GM12878 (cell line): ENCODE measurements at regions of chr1 and their contacts with region 1.

Region 1: GRCh38 chr1:115052454-115053083 is 22.9 kb downstream of the TSHB start:
- DNase-seq: no peak
- ATAC-seq: peak; percentile 88
- H3K4me3 ChIP-seq: no peak overlapping the region
- H3K27ac ChIP-seq: no peak overlapping the region
- H3K4me1 ChIP-seq: no peaks in the 10 kb centered on the region
- H3K27me3 ChIP-seq: no peaks in the 10 kb centered on the region; a peak in 1 of 4 replicates
- CTCF ChIP-seq: peak; percentile 78 to 84 (median 81)
- EP300 ChIP-seq: no peak
- POLR2A ChIP-seq: no peak
- RAD21 ChIP-seq: peak; percentile 64

Region 2: GRCh38 chr1:114979278-114979891 is 73.2 kb before region 1 on chr1:
- CTCF ChIA-PET with region 1: interaction called, 52 read pairs
- POLR2A ChIA-PET with region 1: no interaction called
- RAD21 ChIA-PET with region 1: interaction called, 18 read pairs
- SMC1A ChIA-PET with region 1: interaction called, 65 read pairs
- in situ Hi-C with region 1: no loop called
- intact Hi-C with region 1: loop called (anchors 1 kb)
- DNase-seq: peak; percentile 13
- ATAC-seq: peak; percentile 72
- H3K4me3 ChIP-seq: no peak overlapping the region
- H3K27ac ChIP-seq: no peak overlapping the region
- H3K4me1 ChIP-seq: no peaks in the 10 kb centered on the region
- H3K27me3 ChIP-seq: no peaks in the 10 kb centered on the region
- CTCF ChIP-seq: peak; percentile 60 to 70 (median 65); a peak in 5 of 6 replicates
- EP300 ChIP-seq: no peak
- POLR2A ChIP-seq: no peak
- RAD21 ChIP-seq: peak; percentile 73

Region 3: DNA sequence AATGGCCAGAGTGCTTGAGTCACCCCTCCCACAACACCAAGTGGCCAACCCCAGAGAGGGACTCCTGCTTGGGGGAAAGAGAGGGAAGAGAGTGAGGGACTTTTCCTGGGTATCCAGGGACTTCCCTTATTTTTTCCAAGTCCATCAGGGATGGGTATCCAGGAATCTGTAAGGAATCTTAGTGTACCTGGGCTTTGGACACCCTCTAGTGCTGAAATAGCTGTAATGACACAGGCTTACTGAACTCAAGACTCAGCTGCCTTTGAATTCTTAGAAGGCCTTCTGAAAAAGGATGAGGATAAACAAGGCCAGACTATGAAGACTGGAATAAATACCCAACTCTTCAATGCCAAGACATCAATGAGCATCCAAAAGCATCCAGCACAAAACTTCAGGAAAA is 10.9 kb before region 1 on chr1:
- CTCF ChIA-PET with region 1: interaction called, 63 read pairs
- POLR2A ChIA-PET with region 1: no interaction called
- RAD21 ChIA-PET with region 1: interaction called, 4 read pairs
- SMC1A ChIA-PET with region 1: interaction called, 5 read pairs
- in situ Hi-C with region 1: no loop called
- intact Hi-C with region 1: no loop called
- DNase-seq: no peak
- ATAC-seq: no peak
- H3K4me3 ChIP-seq: no peak overlapping the region
- H3K27ac ChIP-seq: no peak overlapping the region
- H3K4me1 ChIP-seq: no peaks in the 10 kb centered on the region
- H3K27me3 ChIP-seq: no peaks in the 10 kb centered on the region
- CTCF ChIP-seq: peak in 1 of 3 experiments; percentile 10; a peak in 1 of 6 replicates
- EP300 ChIP-seq: no peak
- POLR2A ChIP-seq: no peak
- RAD21 ChIP-seq: 0 out of 2 replicates have a peak, but pooled peaks have one; percentile 6

Region 4: GRCh38 chr1:115068826-115069572 is 16.4 kb after region 1 on chr1:
- CTCF ChIA-PET with region 1: interaction called, 52 read pairs
- POLR2A ChIA-PET with region 1: interaction called, 10 read pairs
- RAD21 ChIA-PET with region 1: interaction called, 25 read pairs
- SMC1A ChIA-PET with region 1: interaction called, 32 read pairs
- in situ Hi-C with region 1: no loop called
- intact Hi-C with region 1: no loop called
- DNase-seq: no peak
- ATAC-seq: no peak
- H3K4me3 ChIP-seq: no peak overlapping the region
- H3K27ac ChIP-seq: no peak overlapping the region
- H3K4me1 ChIP-seq: no peaks in the 10 kb centered on the region
- H3K27me3 ChIP-seq: no peaks in the 10 kb centered on the region; a peak in 1 of 4 replicates
- CTCF ChIP-seq: no peak
- EP300 ChIP-seq: no peak
- POLR2A ChIP-seq: no peak
- RAD21 ChIP-seq: no peak

Region 5: DNA sequence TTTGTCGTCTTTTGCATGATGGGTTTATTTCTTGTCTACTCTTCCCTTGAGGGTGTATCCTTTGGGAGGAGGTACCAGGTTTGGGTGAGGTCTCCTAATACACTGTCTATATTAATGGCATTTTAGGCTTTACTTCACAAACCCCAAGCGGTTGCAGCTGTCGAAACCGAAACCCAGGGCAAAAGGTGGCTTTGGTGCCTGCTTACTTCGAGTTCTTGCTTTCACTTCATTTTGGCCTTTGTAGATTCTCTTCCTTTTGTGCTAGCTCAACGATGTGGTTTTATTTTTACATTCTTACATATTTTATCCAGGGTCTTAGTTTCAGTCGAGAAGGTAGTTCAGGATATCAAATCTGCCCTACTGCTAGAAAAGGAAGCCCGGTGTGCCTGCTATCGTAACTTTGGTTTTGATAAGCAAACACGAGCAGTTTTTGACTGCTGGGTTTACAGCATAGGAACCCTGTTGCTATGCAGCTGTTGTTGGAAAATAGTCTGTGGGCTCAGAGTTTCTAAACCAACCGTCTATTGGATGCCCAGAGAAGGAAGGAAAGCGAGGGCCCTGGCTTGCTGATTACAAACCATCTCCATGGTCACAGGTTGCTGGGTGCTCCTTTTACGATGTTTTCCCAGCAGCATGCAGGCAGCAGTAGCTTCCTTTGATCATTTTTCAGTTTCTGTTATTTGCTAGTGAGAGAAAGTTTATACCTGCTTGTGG is 46.6 kb after region 1 on chr1:
- CTCF ChIA-PET with region 1: interaction called, 23 read pairs
- POLR2A ChIA-PET with region 1: interaction called, 5 read pairs
- RAD21 ChIA-PET with region 1: interaction called, 27 read pairs
- SMC1A ChIA-PET with region 1: interaction called, 22 read pairs
- in situ Hi-C with region 1: no loop called
- intact Hi-C with region 1: no loop called
- DNase-seq: peak; percentile 37
- ATAC-seq: peak; percentile 93
- H3K4me3 ChIP-seq: peak overlapping the region; percentile 62; the same call in 1 of the 2 replicates
- H3K27ac ChIP-seq: no peak overlapping the region
- H3K4me1 ChIP-seq: peaks cover 7% of the 10 kb centered on the region
- H3K27me3 ChIP-seq: no peaks in the 10 kb centered on the region
- CTCF ChIP-seq: no peak
- EP300 ChIP-seq: peak in 1 of 2 experiments; percentile 32; a peak in 2 of 4 replicates
- POLR2A ChIP-seq: no peak
- RAD21 ChIP-seq: no peak

Region 6: DNA sequence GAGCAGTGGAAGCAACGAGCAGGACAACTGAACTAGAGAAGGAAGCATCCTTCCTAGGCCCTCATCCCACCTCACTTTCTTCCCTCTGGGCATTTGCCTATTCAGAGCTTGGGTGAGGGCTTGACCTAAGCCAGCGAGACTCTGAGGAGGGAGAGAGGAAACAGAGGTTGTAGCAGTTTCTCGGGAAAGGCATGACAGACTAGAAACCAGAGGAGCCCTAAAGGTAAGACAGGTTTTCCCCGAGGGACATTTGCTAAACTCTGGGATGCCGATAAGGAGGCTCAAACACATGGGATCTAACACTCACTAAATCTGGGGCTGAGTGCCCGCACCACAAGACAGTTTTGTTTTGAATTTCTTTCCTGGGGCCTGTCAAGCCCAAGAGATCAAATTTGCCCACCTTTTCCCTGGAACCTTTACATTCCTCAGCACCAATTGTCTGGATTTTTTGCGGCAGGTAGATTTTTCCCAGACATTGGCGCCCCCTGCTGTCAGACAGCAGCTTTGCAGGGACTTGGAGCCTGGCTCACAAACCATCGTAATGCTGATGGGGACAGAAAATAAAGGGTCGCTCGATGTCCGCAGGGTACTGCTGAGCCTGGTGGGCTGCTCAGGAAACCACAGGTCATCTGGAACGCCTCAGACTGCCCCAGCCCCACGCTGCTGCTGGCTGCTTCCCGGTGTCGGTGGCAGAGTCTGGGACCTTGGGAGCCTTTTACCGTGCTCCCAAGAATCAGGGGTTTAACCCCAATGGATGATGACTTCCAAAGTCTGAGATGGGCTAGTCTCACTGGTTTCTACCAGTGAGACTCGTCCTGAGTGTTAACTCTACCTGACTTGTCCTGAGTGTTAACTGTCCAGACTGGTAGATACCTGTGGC is 60.2 kb after region 1 on chr1:
- CTCF ChIA-PET with region 1: interaction called, 138 read pairs
- POLR2A ChIA-PET with region 1: no interaction called
- RAD21 ChIA-PET with region 1: interaction called, 43 read pairs
- SMC1A ChIA-PET with region 1: interaction called, 82 read pairs
- in situ Hi-C with region 1: no loop called
- intact Hi-C with region 1: loop called (anchors 1 kb)
- DNase-seq: no peak
- ATAC-seq: peak; percentile 70
- H3K4me3 ChIP-seq: no peak overlapping the region
- H3K27ac ChIP-seq: no peak overlapping the region
- H3K4me1 ChIP-seq: no peaks in the 10 kb centered on the region
- H3K27me3 ChIP-seq: no peaks in the 10 kb centered on the region; a peak in 1 of 4 replicates
- CTCF ChIP-seq: peak; percentile 77 to 95 (median 90)
- EP300 ChIP-seq: no peak
- POLR2A ChIP-seq: no peak
- RAD21 ChIP-seq: peak; percentile 83

Region 7: GRCh38 chr1:115373305-115373704 is 320.7 kb after region 1 on chr1:
- CTCF ChIA-PET with region 1: no interaction called
- POLR2A ChIA-PET with region 1: no interaction called
- RAD21 ChIA-PET with region 1: no interaction called
- SMC1A ChIA-PET with region 1: no interaction called
- in situ Hi-C with region 1: no loop called
- intact Hi-C with region 1: no loop called
- DNase-seq: no peak
- ATAC-seq: no peak
- H3K4me3 ChIP-seq: no peak overlapping the region
- H3K27ac ChIP-seq: no peak overlapping the region
- H3K4me1 ChIP-seq: no peaks in the 10 kb centered on the region
- H3K27me3 ChIP-seq: no peaks in the 10 kb centered on the region
- CTCF ChIP-seq: no peak
- EP300 ChIP-seq: no peak
- POLR2A ChIP-seq: no peak
- RAD21 ChIP-seq: no peak